Body of pancreas (tissue), 4 donors: ENCODE measurements at regions of chr3 and their contacts with region 1.

Region 1: GRCh38 chr3:61078048-61078752 is 173.1 kb downstream of the FHIT start:
- DNase-seq: no peak
- ATAC-seq: no peak
- H3K4me3 ChIP-seq: no peak overlapping the region
- H3K27ac ChIP-seq: no peak overlapping the region
- H3K4me1 ChIP-seq: no peaks in the 10 kb centered on the region
- H3K27me3 ChIP-seq: no peaks in the 10 kb centered on the region
- CTCF ChIP-seq: no peak
- POLR2A ChIP-seq: no peak

Region 2: GRCh38 chr3:60890226-60890625 is 188.0 kb before region 1 on chr3:
- intact Hi-C with region 1: no loop called
- DNase-seq: peak in 3 of 4 donors; percentile 2 to 25 (median 8)
- ATAC-seq: no peak
- H3K4me3 ChIP-seq: no peak overlapping the region
- H3K27ac ChIP-seq: no peak overlapping the region
- H3K4me1 ChIP-seq: no peaks in the 10 kb centered on the region
- H3K27me3 ChIP-seq: no peaks in the 10 kb centered on the region
- CTCF ChIP-seq: no peak
- POLR2A ChIP-seq: no peak

Region 3: DNA sequence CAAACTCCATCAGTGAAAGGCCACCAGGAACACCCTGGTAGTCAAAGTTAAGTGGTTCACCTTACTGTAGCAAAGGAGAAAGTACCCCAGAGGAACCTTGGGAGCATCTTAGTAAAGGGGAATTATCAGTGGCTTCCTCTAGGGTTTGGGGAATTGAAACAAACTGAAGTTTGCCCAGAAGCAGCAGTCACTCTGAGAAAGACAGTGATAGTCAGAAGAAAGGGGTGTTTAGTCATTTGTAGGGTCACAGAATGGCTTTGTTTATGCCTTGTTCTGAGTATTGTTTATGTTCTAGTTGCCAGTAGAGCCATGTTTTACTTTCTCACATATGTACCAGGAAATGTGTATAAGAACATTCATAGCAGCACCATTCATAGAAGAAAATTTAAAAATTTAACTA is 79.2 kb after region 1 on chr3:
- intact Hi-C with region 1: no loop called
- DNase-seq: no peak
- ATAC-seq: no peak
- H3K4me3 ChIP-seq: no peak overlapping the region
- H3K27ac ChIP-seq: no peak overlapping the region
- H3K4me1 ChIP-seq: peaks cover 25% of the 10 kb centered on the region
- H3K27me3 ChIP-seq: no peaks in the 10 kb centered on the region
- CTCF ChIP-seq: no peak
- POLR2A ChIP-seq: no peak

Region 4: DNA sequence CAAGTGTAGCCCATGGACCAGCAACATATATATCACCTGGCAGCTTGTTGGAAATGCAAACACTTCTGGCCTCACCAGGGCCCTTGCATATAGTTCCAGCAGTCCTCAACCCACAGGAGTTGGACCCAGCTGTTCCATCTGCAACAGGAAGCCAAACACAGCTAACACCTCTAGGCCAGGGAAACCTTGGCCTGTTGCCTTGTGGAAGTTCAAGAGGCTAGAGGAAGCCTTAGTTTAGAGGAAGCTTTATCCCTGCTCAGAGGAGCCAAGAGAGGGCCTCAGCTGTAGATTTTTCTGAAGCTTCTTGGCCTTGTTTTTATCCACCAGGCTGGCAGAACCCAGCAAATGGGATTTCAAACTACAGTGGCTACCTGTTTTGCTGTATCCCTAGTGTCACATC is 161.7 kb after region 1 on chr3:
- intact Hi-C with region 1: loop called (anchors 10 kb)
- DNase-seq: peak in 3 of 4 donors; percentile 15 to 41 (median 32)
- ATAC-seq: no peak
- H3K4me3 ChIP-seq: no peak overlapping the region
- H3K27ac ChIP-seq: no peak overlapping the region
- H3K4me1 ChIP-seq: peaks cover 7% of the 10 kb centered on the region
- H3K27me3 ChIP-seq: no peaks in the 10 kb centered on the region
- CTCF ChIP-seq: no peak
- POLR2A ChIP-seq: no peak

Region 5: GRCh38 chr3:62101488-62101887 is 1023.3 kb after region 1 on chr3:
- intact Hi-C with region 1: no loop called
- DNase-seq: peak in 1 of 4 donors; percentile 9
- ATAC-seq: no peak
- H3K4me3 ChIP-seq: no peak overlapping the region
- H3K27ac ChIP-seq: no peak overlapping the region
- H3K4me1 ChIP-seq: no peaks in the 10 kb centered on the region
- H3K27me3 ChIP-seq: no peaks in the 10 kb centered on the region
- CTCF ChIP-seq: no peak
- POLR2A ChIP-seq: no peak